ENCODE measurements at regions of chr20 and their contacts with region 1.

Region 1: DNA sequence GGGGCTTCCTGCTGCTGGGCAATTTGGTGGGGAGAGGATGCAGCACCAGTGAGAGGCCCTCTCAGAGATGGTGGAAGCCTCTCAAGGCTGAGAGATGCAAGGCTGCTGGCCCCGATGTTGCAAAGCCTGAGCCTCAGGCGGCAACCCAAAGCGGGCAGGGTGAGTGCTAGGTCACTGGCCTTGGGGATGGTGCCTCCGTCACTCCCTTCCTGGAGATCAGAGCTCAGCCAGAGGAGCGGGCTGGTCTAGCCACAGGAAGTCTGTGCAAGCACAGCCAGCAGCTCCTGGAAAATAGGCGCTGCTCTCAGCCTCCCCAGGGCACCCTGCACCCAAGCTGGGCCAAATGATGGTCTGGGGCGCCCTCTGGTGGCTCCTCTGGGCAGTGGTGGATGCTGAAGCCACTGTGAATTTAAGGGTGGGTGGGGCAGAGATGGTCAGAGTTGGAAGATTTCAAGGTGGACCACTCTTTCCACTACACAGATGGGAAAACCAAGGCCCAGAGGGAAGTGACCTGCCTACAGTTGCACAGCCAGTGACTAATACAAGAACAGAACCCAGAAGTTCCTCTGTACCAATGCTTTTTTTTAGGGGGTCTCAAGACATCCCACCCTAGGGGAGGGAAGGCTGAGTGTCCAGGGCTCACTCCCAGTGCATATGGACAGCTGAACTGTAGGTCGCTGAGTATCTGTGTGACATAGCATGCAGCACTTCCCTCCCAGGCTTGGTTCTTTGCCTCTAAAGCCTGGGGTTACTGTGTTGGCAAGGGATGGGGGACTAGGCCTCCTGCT is 20.8 kb downstream of the C20orf203 start:
- DNase-seq: peak; percentile 85 to 92 (median 86)
- ATAC-seq: peak; percentile 93 to 98 (median 97)
- H3K4me3 ChIP-seq: no peak overlapping the region
- H3K27ac ChIP-seq: no peak overlapping the region
- H3K4me1 ChIP-seq: peaks cover 0 to 5% (median 1%) of the 10 kb centered on the region in 12 donors
- H3K27me3 ChIP-seq: no peaks in the 10 kb centered on the region
- CTCF ChIP-seq: peak; percentile 90 to 96 (median 94)
- POLR2A ChIP-seq: no peak

Region 2: GRCh38 chr20:32155017-32155981 is 497.6 kb before region 1 on chr20:
- intact Hi-C with region 1: loop called in 2 of 10 experiments (anchors 2 to 10 kb)
- DNase-seq: peak; percentile 84 to 92 (median 89)
- ATAC-seq: peak; percentile 77 to 96 (median 94)
- H3K4me3 ChIP-seq: no peak overlapping the region
- H3K27ac ChIP-seq: peak overlapping the region in 11 of 12 donors; percentile 18 to 72 (median 57)
- H3K4me1 ChIP-seq: peaks cover 3 to 24% (median 14%) of the 10 kb centered on the region in 12 donors
- H3K27me3 ChIP-seq: no peaks in the 10 kb centered on the region
- CTCF ChIP-seq: peak in 11 of 12 donors; percentile 4 to 50 (median 33)
- POLR2A ChIP-seq: no peak

Region 3: GRCh38 chr20:32585011-32585518 is 67.9 kb before region 1 on chr20 and contains the start of gene NOL4L:
- intact Hi-C with region 1: no loop called
- DNase-seq: peak in 1 of 5 donors; percentile 47
- ATAC-seq: peak in 2 of 4 donors; percentile 7 to 9
- H3K4me3 ChIP-seq: peak within 1 kb of the TSS; percentile 37 to 80 (median 64)
- H3K27ac ChIP-seq: peak within 1 kb of the TSS in 4 of 12 donors; percentile 34 to 80 (median 53)
- H3K4me1 ChIP-seq: peaks cover 0 to 36% (median 4%) of the 10 kb centered on the region in 12 donors
- H3K27me3 ChIP-seq: peaks cover 0 to 14% (median 4%) of the 10 kb centered on the region in 9 donors
- CTCF ChIP-seq: no peak
- POLR2A ChIP-seq: no peak
- total RNA-seq, gene NOL4L: 3.1 to 15.0 (median 6.7) TPM